ENCODE measurements at regions of chr4 and their contacts with region 1.

Region 1: GRCh38 chr4:140359562-140360427 is 13.7 kb upstream of the SCOC start:
- DNase-seq: peak; percentile 81
- ATAC-seq: peak; percentile 89
- H3K4me3 ChIP-seq: no peak overlapping the region
- H3K27ac ChIP-seq: no peak overlapping the region
- H3K4me1 ChIP-seq: no peaks in the 10 kb centered on the region; the same call in 1 of the 2 replicates
- H3K27me3 ChIP-seq: peaks cover 12% of the 10 kb centered on the region
- CTCF ChIP-seq: peak; percentile 64
- POLR2A ChIP-seq: no peak
- RAD21 ChIP-seq: peak; percentile 61

Region 2: DNA sequence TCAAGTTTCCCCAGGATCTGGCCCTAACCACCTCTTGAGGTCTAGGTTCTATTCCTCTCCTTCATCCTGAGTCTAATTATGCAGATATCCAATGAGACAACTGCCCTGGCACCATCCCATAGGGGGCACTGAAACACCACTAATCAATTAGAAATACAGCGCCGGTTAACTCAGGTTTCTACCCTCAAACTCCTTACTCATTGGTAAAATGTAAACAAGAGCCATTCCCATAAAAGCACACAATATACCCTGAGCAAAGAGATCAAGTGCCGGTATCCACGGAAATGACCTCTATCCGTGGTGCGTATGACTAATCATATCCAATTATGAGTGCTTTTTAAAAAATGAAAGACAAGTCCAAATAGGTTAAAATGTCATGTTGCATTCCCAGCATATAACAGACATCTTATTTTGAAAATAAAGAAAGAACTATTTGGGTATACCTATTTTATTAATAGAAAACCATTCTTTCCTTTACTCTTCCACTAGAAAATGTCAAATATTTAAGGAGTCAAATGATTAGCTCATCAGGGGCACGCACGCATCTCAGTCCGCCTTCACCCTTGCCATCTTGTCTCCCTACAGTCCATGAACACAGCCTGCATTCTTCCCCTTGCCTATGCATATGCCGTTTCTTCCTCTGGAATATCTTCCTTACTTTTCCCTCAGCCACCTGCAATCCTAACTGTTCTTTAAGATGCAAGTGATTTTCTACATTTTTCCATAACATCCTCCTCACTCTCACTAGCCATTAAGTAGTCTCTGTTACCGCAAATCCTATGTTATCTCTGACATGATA is 346.9 kb before region 1 on chr4:
- CTCF ChIA-PET with region 1: interaction called, 4 read pairs
- POLR2A ChIA-PET with region 1: no interaction called
- dilution Hi-C with region 1: no loop called
- in situ Hi-C with region 1: loop called (anchors 10 kb)
- intact Hi-C with region 1: loop called (anchors 1 kb)
- DNase-seq: peak; percentile 95
- ATAC-seq: peak; percentile 98
- H3K4me3 ChIP-seq: no peak overlapping the region
- H3K27ac ChIP-seq: no peak overlapping the region
- H3K4me1 ChIP-seq: peaks cover 4% of the 10 kb centered on the region
- H3K27me3 ChIP-seq: no peaks in the 10 kb centered on the region
- CTCF ChIP-seq: peak; percentile 91
- POLR2A ChIP-seq: no peak
- RAD21 ChIP-seq: peak; percentile 95

Region 3: DNA sequence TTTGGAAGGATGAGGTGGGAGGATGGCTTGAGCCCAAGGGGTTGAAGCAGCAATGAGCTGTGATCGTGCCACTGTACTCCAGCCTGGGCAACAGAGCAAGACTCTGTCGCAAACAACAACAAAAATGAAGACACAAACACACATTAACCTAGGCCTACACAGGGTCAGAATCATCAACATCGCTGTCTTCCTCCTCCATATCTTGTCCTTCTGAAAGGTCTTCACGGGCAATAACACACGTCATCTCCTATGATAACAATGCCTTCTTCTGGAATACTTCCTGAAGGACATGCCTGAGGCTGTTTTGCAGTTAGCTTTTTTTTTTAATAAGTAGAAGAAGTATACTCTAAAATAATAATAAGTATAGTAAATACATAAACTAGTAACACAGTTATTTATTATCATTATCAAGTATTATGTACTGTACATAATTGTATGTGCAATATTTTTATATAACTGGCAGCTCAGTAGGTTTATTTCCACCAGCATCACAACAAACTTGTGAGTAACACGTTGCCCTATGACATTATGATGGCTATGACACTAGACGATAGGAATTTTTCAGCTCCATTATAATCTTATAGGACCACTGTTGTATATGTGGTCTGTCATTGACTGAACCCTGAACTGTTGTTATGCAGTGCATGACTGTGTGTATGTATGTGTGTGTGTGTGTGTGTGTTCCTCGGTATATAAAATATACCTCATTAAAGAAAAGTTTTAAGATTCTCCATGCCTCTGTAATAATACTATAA is 136.6 kb before region 1 on chr4:
- CTCF ChIA-PET with region 1: no interaction called
- POLR2A ChIA-PET with region 1: no interaction called
- dilution Hi-C with region 1: no loop called
- in situ Hi-C with region 1: no loop called
- intact Hi-C with region 1: no loop called
- DNase-seq: peak; percentile 81
- ATAC-seq: peak; percentile 32
- H3K4me3 ChIP-seq: no peak overlapping the region
- H3K27ac ChIP-seq: no peak overlapping the region
- H3K4me1 ChIP-seq: no peaks in the 10 kb centered on the region; the same call in 1 of the 2 replicates
- H3K27me3 ChIP-seq: no peaks in the 10 kb centered on the region
- CTCF ChIP-seq: no peak
- POLR2A ChIP-seq: no peak
- RAD21 ChIP-seq: no peak

Region 4: DNA sequence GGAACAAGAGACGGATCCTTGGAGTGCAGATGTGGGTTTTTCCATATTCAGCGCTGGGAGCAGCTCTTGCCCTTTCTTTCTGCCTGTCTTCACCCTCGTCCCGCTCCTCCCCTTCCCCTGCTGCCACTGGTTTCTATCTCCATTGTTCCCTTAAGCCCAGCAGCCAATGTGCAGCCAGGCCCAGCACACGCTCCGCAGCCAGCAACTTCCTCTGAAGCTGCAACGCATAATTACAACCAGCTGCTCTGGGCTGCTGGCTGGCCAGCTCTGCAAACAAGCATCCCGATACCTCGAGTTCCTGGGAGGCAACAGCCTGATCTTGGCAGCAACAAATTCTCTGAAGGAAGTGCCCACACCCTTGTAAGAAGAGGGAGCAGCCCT is 122.2 kb before region 1 on chr4:
- CTCF ChIA-PET with region 1: no interaction called
- POLR2A ChIA-PET with region 1: no interaction called
- dilution Hi-C with region 1: no loop called
- in situ Hi-C with region 1: no loop called
- intact Hi-C with region 1: no loop called
- DNase-seq: peak; percentile 93
- ATAC-seq: peak; percentile 81
- H3K4me3 ChIP-seq: no peak overlapping the region
- H3K27ac ChIP-seq: peak overlapping the region; percentile 87
- H3K4me1 ChIP-seq: peaks cover 28% of the 10 kb centered on the region
- H3K27me3 ChIP-seq: no peaks in the 10 kb centered on the region
- CTCF ChIP-seq: no peak
- POLR2A ChIP-seq: no peak
- RAD21 ChIP-seq: 0 out of 2 replicates have a peak, but pooled peaks have one; percentile 11

Region 5: DNA sequence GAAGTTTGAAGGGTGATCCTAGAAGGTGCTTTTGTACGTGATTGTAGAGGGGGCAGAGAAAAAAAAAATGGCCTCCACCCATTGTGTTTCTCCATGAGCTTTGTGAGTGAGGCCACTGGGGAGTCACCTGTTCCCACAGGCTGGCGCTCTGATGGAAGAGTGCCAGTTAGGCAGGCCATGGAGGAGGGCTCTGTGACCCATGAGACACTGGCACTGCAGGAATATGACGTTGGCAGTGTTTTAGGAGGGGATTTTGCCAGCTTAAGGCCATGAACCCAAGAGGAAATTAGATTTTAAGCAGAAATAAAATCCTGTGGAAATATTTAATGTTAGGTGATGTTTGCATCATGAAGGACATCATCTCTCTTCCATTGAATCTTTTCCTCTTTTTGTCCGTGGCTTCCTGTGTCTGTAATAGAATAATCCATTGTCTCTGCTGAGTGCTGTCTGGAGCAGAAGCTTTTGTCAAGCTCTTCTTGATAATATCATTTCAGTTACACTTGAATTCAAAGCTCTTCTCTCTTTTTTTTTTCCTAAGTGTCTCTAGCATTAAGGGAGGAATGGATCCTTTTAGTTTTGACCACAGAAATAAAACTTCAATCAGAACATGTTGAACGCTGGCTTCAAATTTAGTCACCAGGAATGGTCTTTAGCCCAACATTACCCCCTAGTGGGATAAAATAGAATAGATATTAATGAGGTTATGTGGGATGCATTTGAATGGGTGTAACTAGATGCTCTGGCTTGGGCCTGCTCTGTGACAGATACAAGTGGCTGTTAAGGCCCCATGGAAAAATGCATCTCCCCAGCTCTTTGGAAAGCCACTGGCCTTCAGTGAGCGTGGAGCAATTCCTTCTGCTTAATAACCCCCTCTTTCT is 250.0 kb after region 1 on chr4:
- CTCF ChIA-PET with region 1: interaction called, 3 read pairs
- POLR2A ChIA-PET with region 1: no interaction called
- dilution Hi-C with region 1: no loop called
- in situ Hi-C with region 1: loop called (anchors 10 kb)
- intact Hi-C with region 1: loop called (anchors 1 kb)
- DNase-seq: peak; percentile 55
- ATAC-seq: peak; percentile 92
- H3K4me3 ChIP-seq: no peak overlapping the region
- H3K27ac ChIP-seq: no peak overlapping the region
- H3K4me1 ChIP-seq: no peaks in the 10 kb centered on the region
- H3K27me3 ChIP-seq: peaks cover 7% of the 10 kb centered on the region
- CTCF ChIP-seq: peak; percentile 67
- POLR2A ChIP-seq: no peak
- RAD21 ChIP-seq: peak; percentile 71

Region 6: GRCh38 chr4:140829825-140830224 is 470.0 kb after region 1 on chr4:
- CTCF ChIA-PET with region 1: no interaction called
- POLR2A ChIA-PET with region 1: no interaction called
- dilution Hi-C with region 1: no loop called
- in situ Hi-C with region 1: loop called (anchors 25 kb)
- intact Hi-C with region 1: no loop called
- DNase-seq: no peak
- ATAC-seq: no peak
- H3K4me3 ChIP-seq: no peak overlapping the region
- H3K27ac ChIP-seq: no peak overlapping the region
- H3K4me1 ChIP-seq: no peaks in the 10 kb centered on the region
- H3K27me3 ChIP-seq: peaks cover 17% of the 10 kb centered on the region
- CTCF ChIP-seq: no peak
- POLR2A ChIP-seq: no peak
- RAD21 ChIP-seq: no peak

Measured in IMR-90 (cell line).